Adrenal gland (tissue), 19 donors: ENCODE measurements at regions of chr12 and their contacts with region 1.

Region 1: DNA sequence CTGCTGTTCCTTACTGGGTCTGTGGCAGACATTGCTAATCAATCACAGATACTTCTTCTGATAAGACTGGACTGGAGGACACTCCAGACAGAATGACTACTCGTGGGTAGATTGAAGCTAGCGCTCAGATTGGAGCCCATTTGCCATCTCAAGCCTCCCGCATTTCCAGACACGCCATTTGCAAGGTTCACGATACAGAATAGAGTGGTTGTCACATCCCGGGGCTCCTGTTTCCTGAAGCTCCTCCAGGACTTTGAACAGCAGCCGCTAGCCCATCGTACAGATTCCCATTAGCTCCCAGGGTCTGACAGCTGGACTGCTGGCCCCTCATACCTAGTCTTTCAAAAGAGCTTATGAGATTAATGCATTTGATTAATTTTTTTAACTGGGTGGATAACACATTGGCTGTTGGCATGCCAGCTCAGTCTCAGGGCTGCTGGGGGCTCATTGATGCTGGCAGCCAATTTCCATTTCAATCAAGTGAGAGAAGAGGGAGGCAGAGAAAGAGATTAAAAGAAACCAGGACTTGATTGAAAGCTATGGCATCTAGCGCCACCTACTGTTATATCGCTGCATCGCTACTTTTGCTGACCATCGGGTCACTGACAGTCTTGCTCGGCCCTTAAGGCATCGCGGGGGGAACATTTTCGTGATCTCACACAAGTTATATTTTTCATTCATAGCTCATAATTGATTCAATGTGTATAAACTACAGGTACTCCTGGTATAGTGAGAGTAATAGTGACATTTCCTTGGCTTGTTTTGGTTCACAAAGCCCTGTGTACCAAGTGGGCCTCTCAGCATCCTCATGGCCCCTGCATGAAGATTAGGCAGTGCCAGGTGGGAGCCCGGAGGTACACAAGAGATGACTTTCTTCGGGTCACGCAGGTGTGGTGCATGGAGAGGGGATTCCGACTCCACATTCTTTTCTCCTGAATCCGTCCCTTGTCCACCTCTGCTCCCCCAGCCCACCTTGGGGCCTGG is 78.6 kb downstream of the CCDC60 start:
- DNase-seq: peak; percentile 50 to 91 (median 69)
- H3K4me3 ChIP-seq: no peak overlapping the region
- H3K27ac ChIP-seq: no peak overlapping the region
- H3K4me1 ChIP-seq: no peaks in the 10 kb centered on the region
- H3K27me3 ChIP-seq: no peaks in the 10 kb centered on the region
- CTCF ChIP-seq: peak; percentile 74 to 88 (median 80)
- POLR2A ChIP-seq: no peak

Region 2: DNA sequence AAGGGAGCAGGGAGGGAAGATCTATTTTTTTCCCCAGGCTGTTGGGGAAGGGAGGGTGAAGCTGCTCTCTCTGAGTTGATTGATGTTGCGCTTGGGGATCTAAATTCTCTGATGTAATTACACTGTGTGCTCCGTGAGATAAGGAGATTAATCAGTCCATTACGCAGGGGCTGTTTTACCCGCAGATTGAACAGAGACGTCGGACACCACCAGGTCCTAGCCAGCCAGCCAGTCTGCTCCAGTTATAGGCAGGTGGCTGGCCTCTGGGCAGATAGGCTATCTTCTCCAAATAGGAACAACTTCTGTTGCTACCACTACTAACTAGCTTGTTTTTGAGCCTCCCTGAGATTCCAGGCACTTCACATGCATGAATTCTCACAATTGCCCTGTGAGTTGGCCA is 340.7 kb before region 1 on chr12:
- intact Hi-C with region 1: no loop called
- DNase-seq: peak in 3 of 7 donors; percentile 16 to 85 (median 22)
- H3K4me3 ChIP-seq: no peak overlapping the region
- H3K27ac ChIP-seq: peak overlapping the region in 1 of 5 donors; percentile 29
- H3K4me1 ChIP-seq: no peaks in the 10 kb centered on the region
- H3K27me3 ChIP-seq: no peaks in the 10 kb centered on the region
- CTCF ChIP-seq: no peak
- POLR2A ChIP-seq: no peak

Region 3: DNA sequence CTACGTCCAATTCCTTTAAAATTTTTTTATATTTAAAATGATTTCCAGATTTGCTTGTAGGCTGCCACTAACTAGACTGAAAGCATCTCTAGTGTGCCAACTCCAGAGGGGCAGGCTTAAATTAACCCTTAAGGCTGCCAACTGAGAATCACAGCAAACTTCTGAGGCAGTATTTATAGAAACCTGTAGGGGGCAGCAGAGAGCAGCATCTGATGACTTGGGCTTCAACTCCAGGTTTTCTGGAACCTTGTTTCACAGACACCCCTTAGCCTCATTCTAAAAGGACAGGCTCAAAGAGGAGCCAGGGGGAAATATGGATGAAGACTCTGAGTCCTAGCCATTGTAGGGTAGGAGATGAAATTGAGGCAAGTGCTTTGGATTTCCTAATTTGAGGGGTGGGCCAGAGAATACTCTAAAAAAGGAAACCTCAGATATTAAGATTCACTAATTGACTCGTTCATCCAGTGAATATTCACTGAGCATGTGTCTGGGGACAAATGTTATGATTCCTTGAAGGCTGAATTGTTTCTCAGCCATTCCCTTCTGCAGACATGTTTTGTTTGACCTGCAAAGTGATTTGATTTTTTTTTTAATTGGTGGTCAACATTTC is 297.7 kb before region 1 on chr12:
- intact Hi-C with region 1: loop called (anchors 2 to 5 kb)
- DNase-seq: peak; percentile 16 to 71 (median 35)
- H3K4me3 ChIP-seq: no peak overlapping the region
- H3K27ac ChIP-seq: no peak overlapping the region
- H3K4me1 ChIP-seq: no peaks in the 10 kb centered on the region
- H3K27me3 ChIP-seq: no peaks in the 10 kb centered on the region
- CTCF ChIP-seq: peak; percentile 61 to 98 (median 80)
- POLR2A ChIP-seq: no peak

Region 4: GRCh38 chr12:119491814-119492213 is 78.7 kb after region 1 on chr12:
- intact Hi-C with region 1: no loop called
- DNase-seq: no peak
- H3K4me3 ChIP-seq: no peak overlapping the region
- H3K27ac ChIP-seq: no peak overlapping the region
- H3K4me1 ChIP-seq: no peaks in the 10 kb centered on the region
- H3K27me3 ChIP-seq: peaks cover 4% of the 10 kb centered on the region
- CTCF ChIP-seq: no peak
- POLR2A ChIP-seq: no peak